WTC11 (cell line): ENCODE measurements at regions of chr9 and their contacts with region 1.

Region 1: DNA sequence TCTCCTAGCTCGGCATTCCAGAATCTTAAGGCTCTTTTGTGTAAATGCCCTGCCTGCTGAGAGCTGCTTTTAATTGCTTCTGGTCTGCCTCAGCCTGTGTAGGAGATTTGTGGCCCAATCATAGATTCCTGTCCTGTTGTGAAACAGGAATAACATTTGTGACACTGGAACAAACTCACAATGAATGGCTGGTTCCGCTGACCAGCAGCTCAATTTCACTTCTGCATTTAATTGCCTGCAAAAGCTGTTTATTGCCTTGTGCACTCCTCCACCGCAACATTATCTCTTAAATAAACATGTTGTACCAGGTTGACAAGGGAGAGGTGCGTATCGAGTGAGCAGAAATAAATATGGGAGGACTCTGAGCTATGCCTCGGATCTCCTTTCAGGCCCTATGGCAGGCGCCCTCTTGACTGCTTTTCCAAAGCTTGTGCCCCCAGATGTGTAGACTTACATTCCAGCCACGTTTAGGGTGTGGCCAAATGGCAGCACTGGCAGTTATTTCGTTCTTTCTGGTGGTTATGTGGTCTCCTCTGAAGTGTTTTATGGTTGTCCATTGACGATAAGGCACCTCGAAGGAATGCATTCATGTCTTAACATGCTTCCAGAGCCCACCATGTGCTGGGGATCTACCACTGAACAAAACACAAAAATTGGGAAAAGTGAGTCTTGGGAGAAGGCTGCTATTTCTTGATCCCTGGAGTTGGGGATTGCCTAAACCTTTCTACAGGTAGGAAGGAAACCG is 58.1 kb downstream of the DMRT1 start:
- DNase-seq: no peak
- ATAC-seq: peak; percentile 78
- H3K4me3 Mint-ChIP-seq: no peak overlapping the region
- H3K27ac Mint-ChIP-seq: no peak overlapping the region
- H3K4me1 Mint-ChIP-seq: peaks cover 36% of the 10 kb centered on the region
- H3K27me3 Mint-ChIP-seq: peaks cover 2% of the 10 kb centered on the region; the same call in 1 of the 2 replicates
- CTCF ChIP-seq: no peak

Region 2: GRCh38 chr9:706606-707459 is 192.8 kb before region 1 on chr9:
- CTCF ChIA-PET with region 1: no interaction called
- POLR2A ChIA-PET with region 1: no interaction called
- DNase-seq: peak; percentile 64
- ATAC-seq: peak; percentile 83
- H3K4me3 Mint-ChIP-seq: peak overlapping the region; percentile 70
- H3K27ac Mint-ChIP-seq: peak overlapping the region; percentile 73
- H3K4me1 Mint-ChIP-seq: peaks cover 26% of the 10 kb centered on the region
- H3K27me3 Mint-ChIP-seq: no peaks in the 10 kb centered on the region
- CTCF ChIP-seq: no peak

Region 3: GRCh38 chr9:911003-911402 is 11.4 kb after region 1 on chr9:
- CTCF ChIA-PET with region 1: interaction called, 13 read pairs
- POLR2A ChIA-PET with region 1: no interaction called
- DNase-seq: peak; percentile 41
- ATAC-seq: peak; percentile 61
- H3K4me3 Mint-ChIP-seq: no peak overlapping the region
- H3K27ac Mint-ChIP-seq: no peak overlapping the region
- H3K4me1 Mint-ChIP-seq: peaks cover 39% of the 10 kb centered on the region
- H3K27me3 Mint-ChIP-seq: no peaks in the 10 kb centered on the region; the same call in 1 of the 2 replicates
- CTCF ChIP-seq: no peak